ENCODE measurements at regions of chr19 and their contacts with region 1.

Region 1: DNA sequence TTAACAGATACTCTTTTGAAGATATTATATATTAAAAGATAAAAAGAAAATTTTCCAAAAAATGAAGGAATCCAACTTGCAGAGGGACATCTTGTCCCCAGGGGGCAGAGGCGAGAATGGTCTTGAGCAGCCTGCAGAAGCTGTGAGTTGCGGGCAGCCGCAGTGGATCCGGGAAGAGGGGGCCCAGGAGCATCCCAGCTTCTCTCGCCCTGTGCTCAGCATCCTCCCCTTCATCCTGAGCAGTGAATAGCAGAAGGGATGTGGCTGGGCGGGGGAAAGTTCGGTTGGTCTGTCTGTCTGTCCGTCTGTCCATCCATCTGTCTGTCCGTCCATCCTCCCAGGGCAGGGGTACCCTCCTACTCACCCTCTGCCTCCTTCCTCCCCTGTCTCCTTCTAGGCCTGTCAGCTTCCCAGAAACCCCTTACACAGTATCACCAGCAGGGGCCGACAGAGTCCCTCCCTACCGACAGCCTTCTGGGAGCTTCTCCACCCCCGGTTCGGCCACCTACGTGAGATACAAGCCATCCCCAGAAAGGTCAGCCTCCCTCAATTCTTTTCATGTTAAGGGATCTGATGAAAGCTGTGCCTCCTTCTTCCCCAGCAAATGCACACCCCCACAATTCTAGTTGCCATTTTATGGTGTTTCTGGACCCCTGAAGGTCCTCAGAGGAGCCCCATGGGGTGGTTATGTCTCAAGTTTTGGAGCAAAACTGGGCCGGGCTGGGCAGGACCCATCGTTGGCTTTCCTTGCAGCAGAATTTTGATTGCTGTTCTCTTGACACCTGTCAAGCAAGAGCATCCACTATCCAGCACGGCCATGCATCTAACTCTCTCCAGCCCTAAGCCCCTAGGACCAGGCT is 81.6 kb downstream of the DPF1 start:
- DNase-seq: peak; percentile 87
- H3K4me3 ChIP-seq: no peak overlapping the region
- H3K27ac ChIP-seq: no peak overlapping the region
- H3K4me1 ChIP-seq: no peaks in the 10 kb centered on the region
- H3K27me3 ChIP-seq: no peaks in the 10 kb centered on the region
- CTCF ChIP-seq: peak; percentile 71
- EP300 ChIP-seq: no peak
- RAD21 ChIP-seq: peak; percentile 88

Region 2: DNA sequence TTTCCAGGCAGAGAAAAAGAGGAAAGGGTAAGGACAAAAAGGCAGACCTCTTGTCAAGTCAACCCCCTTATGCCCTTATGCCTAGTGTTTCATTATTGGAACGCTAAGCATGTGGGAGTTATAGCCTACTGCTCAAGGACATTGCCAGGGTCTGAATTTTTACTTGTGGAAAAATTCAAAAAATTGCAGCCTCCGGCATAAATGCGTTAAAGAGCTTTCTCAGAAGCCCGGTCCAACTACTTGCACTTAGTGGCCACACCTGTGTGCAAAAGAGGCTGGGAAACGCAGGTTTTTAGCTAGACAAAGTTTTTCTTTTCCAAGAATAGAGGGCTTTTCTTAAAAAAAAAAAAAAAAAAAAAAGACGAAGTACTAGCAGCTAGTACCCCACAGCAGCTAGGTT is 58.2 kb before region 1 on chr19:
- CTCF ChIA-PET with region 1: no interaction called
- POLR2A ChIA-PET with region 1: no interaction called
- DNase-seq: no peak
- H3K4me3 ChIP-seq: no peak overlapping the region
- H3K27ac ChIP-seq: no peak overlapping the region
- H3K4me1 ChIP-seq: peaks cover 0 to 4% of the 10 kb centered on the region in 2 experiments; a peak in 1 of 4 replicates
- H3K27me3 ChIP-seq: no peaks in the 10 kb centered on the region
- CTCF ChIP-seq: no peak
- EP300 ChIP-seq: no peak
- RAD21 ChIP-seq: no peak

Region 3: GRCh38 chr19:38115271-38115802 is 27.1 kb before region 1 on chr19:
- CTCF ChIA-PET with region 1: interaction called, 12 read pairs
- POLR2A ChIA-PET with region 1: no interaction called
- DNase-seq: no peak
- H3K4me3 ChIP-seq: no peak overlapping the region
- H3K27ac ChIP-seq: no peak overlapping the region
- H3K4me1 ChIP-seq: no peaks in the 10 kb centered on the region; a peak in 1 of 4 replicates
- H3K27me3 ChIP-seq: no peaks in the 10 kb centered on the region
- CTCF ChIP-seq: no peak
- EP300 ChIP-seq: no peak
- RAD21 ChIP-seq: no peak

Region 4: GRCh38 chr19:38152461-38153379 is 10.3 kb after region 1 on chr19:
- CTCF ChIA-PET with region 1: interaction called, 70 read pairs
- POLR2A ChIA-PET with region 1: interaction called, 3 read pairs
- DNase-seq: peak; percentile 78
- H3K4me3 ChIP-seq: no peak overlapping the region
- H3K27ac ChIP-seq: peak overlapping the region; percentile 45 to 90
- H3K4me1 ChIP-seq: peaks cover 13 to 19% of the 10 kb centered on the region in 2 experiments; a peak in 2 of 4 replicates
- H3K27me3 ChIP-seq: no peaks in the 10 kb centered on the region
- CTCF ChIP-seq: no peak
- EP300 ChIP-seq: peak; percentile 20 to 61; a peak in 3 of 4 replicates
- RAD21 ChIP-seq: peak; percentile 40; the same call in 1 of the 2 replicates

Region 5: GRCh38 chr19:38209671-38210457 is 67.5 kb after region 1 on chr19:
- CTCF ChIA-PET with region 1: interaction called, 13 read pairs
- POLR2A ChIA-PET with region 1: no interaction called
- DNase-seq: peak; percentile 79
- H3K4me3 ChIP-seq: peak overlapping the region in 1 of 2 experiments; percentile 27; a peak in 1 of 4 replicates
- H3K27ac ChIP-seq: peak overlapping the region in 1 of 2 experiments; percentile 69; a peak in 1 of 4 replicates
- H3K4me1 ChIP-seq: peaks cover 4 to 22% of the 10 kb centered on the region in 2 experiments; a peak in 1 of 4 replicates
- H3K27me3 ChIP-seq: no peaks in the 10 kb centered on the region
- CTCF ChIP-seq: no peak
- EP300 ChIP-seq: no peak
- RAD21 ChIP-seq: no peak

Region 6: GRCh38 chr19:38233740-38234251 is 91.4 kb after region 1 on chr19:
- CTCF ChIA-PET with region 1: interaction called, 22 read pairs
- POLR2A ChIA-PET with region 1: no interaction called
- DNase-seq: peak; percentile 88
- H3K4me3 ChIP-seq: no peak overlapping the region; a peak in 1 of 4 replicates
- H3K27ac ChIP-seq: no peak overlapping the region
- H3K4me1 ChIP-seq: peaks cover 0 to 1% of the 10 kb centered on the region in 2 experiments; a peak in 1 of 4 replicates
- H3K27me3 ChIP-seq: no peaks in the 10 kb centered on the region
- CTCF ChIP-seq: peak; percentile 83
- EP300 ChIP-seq: no peak
- RAD21 ChIP-seq: peak; percentile 84

Region 7: DNA sequence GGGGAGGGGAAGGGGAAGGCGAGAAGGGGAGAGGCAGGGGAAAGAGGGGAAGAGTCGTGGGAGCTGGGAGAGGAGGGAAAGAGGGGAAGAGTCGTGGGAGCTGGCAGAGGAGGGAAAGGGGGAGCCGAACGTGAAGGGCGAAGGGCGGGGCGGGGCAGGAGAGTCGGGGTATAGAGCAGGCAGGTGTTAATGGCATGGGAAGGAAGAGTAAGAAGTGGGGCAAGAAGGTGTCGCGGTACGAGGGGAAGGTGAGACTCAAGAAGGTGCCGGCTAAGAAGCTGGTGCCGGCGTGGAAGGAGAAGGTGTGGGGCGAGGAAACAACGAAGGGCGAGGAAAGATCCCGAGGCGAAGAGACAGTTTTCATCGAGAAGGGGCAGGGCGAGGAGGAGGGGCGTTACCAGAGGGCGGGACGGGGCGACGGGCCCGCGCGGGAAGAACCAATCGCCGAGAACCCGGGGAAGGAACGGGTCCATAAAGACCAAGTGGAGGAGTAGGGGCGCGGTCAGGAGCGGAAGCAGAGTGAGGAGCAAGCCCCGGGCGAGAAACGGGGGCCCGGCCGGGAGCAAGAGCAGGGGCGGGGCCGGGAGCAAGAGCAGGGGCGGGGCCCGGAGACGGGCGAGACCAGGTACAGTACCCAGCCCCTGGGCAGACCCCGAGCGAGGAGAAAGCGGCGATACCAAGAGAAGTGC is 193.7 kb after region 1 on chr19:
- CTCF ChIA-PET with region 1: interaction called, 18 read pairs
- POLR2A ChIA-PET with region 1: no interaction called
- DNase-seq: peak; percentile 92
- H3K4me3 ChIP-seq: peak overlapping the region; percentile 68 to 96
- H3K27ac ChIP-seq: peak overlapping the region; percentile 82 to 86
- H3K4me1 ChIP-seq: peaks cover 0 to 8% of the 10 kb centered on the region in 2 experiments; a peak in 1 of 4 replicates
- H3K27me3 ChIP-seq: no peaks in the 10 kb centered on the region
- CTCF ChIP-seq: no peak
- EP300 ChIP-seq: no peak
- RAD21 ChIP-seq: no peak